Right cardiac atrium (tissue), 5 donors: ENCODE measurements at regions of chr3 and their contacts with region 1.

Region 1: DNA sequence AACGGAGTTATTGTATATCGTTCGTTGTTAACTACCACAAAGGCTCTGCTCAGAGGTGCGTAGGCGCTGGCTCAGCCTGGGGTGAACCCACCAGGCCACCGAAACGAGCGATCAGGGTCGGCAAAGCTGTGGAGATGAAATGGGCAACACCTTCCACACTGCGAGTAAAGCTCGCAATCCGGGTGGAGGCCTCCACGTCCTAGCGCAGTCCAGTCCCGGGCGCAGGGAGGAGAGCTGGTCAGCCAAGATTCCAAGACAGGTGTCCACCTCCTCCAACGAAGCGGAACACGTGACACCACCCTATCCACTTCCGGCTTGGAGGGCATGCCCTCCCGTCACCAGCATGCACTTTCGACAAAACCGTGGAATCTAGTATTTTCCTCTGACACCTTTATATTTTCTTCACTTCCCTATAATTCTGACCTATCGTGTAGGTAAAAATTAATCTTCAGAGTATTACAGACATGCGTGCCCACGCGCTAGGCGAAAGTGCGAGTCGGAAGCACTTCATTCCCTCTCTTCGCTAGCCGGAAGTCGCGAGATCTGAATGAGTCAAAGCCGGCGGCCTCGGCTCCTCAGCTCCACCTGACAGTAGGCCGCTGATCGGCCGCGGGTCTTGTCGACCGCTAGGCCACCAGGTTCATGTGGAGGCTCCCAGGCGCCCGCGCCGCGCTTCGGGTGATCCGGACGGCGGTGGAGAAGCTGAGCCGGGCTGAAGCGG is at the start of gene PDE12:
- DNase-seq: peak; percentile 85 to 92 (median 90)
- ATAC-seq: peak; percentile 96
- H3K4me3 ChIP-seq: peak within 1 kb of the TSS; percentile 81
- H3K27ac ChIP-seq: peak within 1 kb of the TSS; percentile 92
- H3K4me1 ChIP-seq: peaks cover 7% of the 10 kb centered on the region
- H3K27me3 ChIP-seq: no peaks in the 10 kb centered on the region
- total RNA-seq, gene PDE12: 9.6 to 14.8 (median 11.9) TPM

Region 2: GRCh38 chr3:57597122-57597923 is 41.4 kb after region 1 on chr3 and contains the start of gene ARF4:
- intact Hi-C with region 1: loop called in 1 of 4 experiments (anchors 5 kb)
- DNase-seq: peak; percentile 100
- ATAC-seq: peak; percentile 97 to 98
- H3K4me3 ChIP-seq: peak within 1 kb of the TSS; percentile 76
- H3K27ac ChIP-seq: peak within 1 kb of the TSS; percentile 92
- H3K4me1 ChIP-seq: peaks cover 1% of the 10 kb centered on the region
- H3K27me3 ChIP-seq: no peaks in the 10 kb centered on the region
- total RNA-seq, gene ARF4: 69.3 to 113 (median 87.7) TPM